ENCODE measurements at regions of chr13 and their contacts with region 1.

Region 1: GRCh38 chr13:77751513-77752456 is 54.3 kb downstream of the SLAIN1 start:
- DNase-seq: peak in 11 of 14 experiments; percentile 13 to 77 (median 22)
- ATAC-seq: peak; percentile 92
- H3K4me3 ChIP-seq: no peak overlapping the region
- H3K4me3 Mint-ChIP-seq: no peak overlapping the region
- H3K27ac ChIP-seq: no peak overlapping the region
- H3K27ac Mint-ChIP-seq: peak overlapping the region; percentile 3
- H3K4me1 ChIP-seq: no peaks in the 10 kb centered on the region
- H3K4me1 Mint-ChIP-seq: peaks cover 32% of the 10 kb centered on the region
- H3K27me3 ChIP-seq: no peaks in the 10 kb centered on the region
- H3K27me3 Mint-ChIP-seq: no peaks in the 10 kb centered on the region
- CTCF ChIP-seq: peak; percentile 89

Region 2: DNA sequence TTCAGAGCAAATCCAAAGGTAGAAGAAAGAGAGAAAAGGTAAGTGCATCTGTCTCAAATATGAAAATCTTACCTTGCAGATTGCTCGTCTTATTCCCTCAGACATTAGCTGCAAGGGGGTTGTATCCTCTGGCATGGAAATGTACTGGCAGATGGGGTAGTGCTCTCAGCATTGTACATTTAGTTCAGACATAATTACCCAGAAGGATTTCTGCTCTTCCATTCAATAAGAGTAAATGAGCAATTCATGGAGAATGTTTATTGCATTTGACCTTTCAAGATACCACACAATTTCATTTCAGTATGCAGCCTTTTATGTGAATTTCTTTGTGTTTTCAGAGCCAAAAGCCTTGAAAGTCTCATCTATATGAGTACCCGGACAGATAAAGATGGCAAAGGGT is 152.4 kb before region 1 on chr13:
- CTCF ChIA-PET with region 1: interaction called, 3 read pairs
- POLR2A ChIA-PET with region 1: no interaction called
- intact Hi-C with region 1: loop called in 1 of 2 experiments (anchors 1 kb)
- DNase-seq: no peak
- ATAC-seq: no peak
- H3K4me3 ChIP-seq: no peak overlapping the region
- H3K4me3 Mint-ChIP-seq: no peak overlapping the region
- H3K27ac ChIP-seq: no peak overlapping the region
- H3K27ac Mint-ChIP-seq: no peak overlapping the region
- H3K4me1 ChIP-seq: no peaks in the 10 kb centered on the region
- H3K4me1 Mint-ChIP-seq: no peaks in the 10 kb centered on the region
- H3K27me3 ChIP-seq: peaks cover 0 to 12% of the 10 kb centered on the region in 2 experiments
- H3K27me3 Mint-ChIP-seq: peaks cover 7% of the 10 kb centered on the region
- CTCF ChIP-seq: no peak

Measured in CD4-positive, alpha-beta T cell (primary cell).